Activated T-helper 1 cell treated with anti-CD3 and anti-CD28 coated beads, Interleukin-12 subunit alpha, Interleukin-12 subunit beta, Interleukin-2, Interleukin-4 antibody, amounts not matched to agents 30 ng/mL and 10 ng/mL and 1 ng/mL, durations not matched to agents 14 hours and 24 hours and 36 hours (primary cell): ENCODE measurements at regions of chr2 and their contacts with region 1.

Region 1: DNA sequence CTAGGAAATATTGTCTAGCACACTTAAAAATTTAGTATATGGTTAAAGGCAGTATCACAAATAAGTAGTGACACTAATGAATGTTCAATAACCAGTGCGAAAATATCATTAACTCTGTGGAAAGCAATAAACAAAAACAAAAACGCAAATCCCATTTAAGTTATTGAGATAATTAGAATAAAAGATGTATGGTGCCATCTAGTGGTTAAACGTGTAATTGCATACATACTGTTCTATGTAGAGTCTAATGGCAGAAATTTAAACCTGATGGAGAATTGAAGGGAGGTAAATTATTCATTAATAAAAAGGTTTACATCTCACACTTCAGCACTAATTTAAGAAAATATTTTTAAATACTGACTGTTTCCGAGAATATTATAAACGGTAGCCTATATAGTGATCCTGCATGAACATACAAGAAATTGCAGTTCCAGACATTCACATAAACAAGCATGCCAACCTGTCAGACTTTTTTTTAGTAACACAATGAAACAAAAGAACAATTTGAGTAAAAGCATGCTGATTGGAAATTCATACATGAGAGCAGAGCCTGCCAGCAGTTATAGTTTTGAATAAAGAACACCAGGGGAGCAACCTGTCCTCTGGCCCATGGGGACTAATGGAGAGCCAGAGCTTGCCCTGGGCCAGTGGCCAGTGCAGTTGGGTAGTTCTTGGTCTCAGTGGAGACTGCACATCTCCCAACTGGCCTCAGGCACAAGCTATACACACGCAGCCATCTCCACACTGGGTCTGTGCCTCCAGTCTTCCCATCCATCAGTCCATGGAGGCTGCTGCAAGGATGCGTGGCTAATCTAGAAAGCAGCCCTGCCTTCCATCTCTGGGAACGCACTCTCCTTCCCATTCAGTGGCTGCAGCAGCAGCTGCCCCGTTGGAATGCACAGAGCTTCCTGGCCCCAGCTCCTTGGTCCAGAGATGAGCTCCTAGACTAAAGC is 28.0 kb downstream of the GCG start:
- DNase-seq: no peak
- H3K4me3 Mint-ChIP-seq: no peak overlapping the region
- H3K27ac Mint-ChIP-seq: no peak overlapping the region
- H3K4me1 Mint-ChIP-seq: peaks cover 21% of the 10 kb centered on the region
- H3K27me3 Mint-ChIP-seq: no peaks in the 10 kb centered on the region

Region 2: DNA sequence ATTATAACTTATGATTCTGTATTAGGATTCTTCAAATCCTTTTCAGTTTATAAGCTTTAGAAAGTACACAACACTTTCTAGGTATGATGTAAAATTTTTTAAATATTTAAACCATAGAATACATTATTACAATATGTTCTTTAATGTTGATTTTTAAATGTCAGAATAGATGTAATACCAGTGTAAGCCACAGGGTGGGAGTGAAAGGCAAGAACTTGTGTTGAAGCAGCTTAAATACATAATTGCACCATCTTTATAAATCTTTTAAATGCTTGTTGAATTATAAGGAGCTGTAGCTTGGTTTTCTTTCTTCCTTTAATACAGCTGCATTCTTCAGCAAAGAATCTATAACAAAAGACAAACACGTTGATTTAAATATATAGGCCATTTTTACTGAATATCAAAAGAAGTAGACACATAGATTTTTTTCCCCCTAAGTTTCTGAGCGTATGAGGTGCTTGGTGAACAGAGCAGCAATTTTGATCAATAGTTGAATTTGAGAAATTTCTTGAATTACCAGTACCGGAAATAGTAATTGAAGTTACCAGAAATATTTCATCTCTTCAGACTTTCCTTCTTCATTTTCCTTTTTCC is 900.8 kb before region 1 on chr2:
- intact Hi-C with region 1: loop called (anchors 5 kb)
- DNase-seq: no peak
- H3K4me3 Mint-ChIP-seq: no peak overlapping the region
- H3K27ac Mint-ChIP-seq: no peak overlapping the region
- H3K4me1 Mint-ChIP-seq: peaks cover 20% of the 10 kb centered on the region
- H3K27me3 Mint-ChIP-seq: no peaks in the 10 kb centered on the region

Region 3: DNA sequence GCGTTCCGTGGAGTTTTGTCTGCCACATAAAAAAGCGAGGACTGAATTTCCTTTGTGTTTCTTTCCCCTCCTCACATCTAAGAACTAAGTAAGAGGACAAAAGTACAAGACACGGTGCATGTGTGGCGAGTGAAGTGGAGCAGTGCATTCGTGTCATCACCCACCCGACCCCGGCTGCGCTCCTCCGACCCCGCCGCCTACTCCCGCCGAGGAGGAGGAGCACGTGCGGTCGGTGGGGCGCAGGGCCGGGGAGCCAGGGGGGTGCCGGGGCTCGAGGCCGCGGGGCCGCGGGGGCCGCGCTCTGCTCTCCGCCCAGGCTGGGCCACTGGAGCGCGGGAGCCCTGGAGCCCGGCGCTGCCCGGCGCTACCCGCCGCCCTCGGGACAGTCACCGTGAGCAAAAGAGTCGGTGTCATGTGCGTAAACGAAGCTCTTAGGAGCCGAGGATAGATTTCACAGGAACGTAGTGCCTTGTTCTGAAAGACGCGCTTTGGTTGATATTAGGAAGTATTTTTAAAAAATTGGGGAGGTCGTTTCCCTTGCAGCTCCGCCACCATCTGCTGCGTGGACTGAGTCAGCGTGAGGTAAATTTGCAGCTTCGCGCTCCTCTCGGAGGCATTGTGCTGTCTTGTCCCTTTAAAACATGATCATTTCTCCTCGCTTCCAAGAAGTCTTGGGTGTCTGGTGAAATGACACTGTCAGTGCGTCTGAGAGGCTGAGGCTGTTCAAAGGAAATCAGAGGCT is 697.0 kb before region 1 on chr2:
- intact Hi-C with region 1: loop called (anchors 5 kb)
- DNase-seq: no peak
- H3K4me3 Mint-ChIP-seq: peak overlapping the region; percentile 74
- H3K27ac Mint-ChIP-seq: peak overlapping the region; percentile 72
- H3K4me1 Mint-ChIP-seq: peaks cover 29% of the 10 kb centered on the region
- H3K27me3 Mint-ChIP-seq: peaks cover 84% of the 10 kb centered on the region

Region 4: GRCh38 chr2:161946489-161947107 is 177.5 kb before region 1 on chr2:
- intact Hi-C with region 1: loop called (anchors 1 kb)
- DNase-seq: no peak
- H3K4me3 Mint-ChIP-seq: no peak overlapping the region
- H3K27ac Mint-ChIP-seq: peak overlapping the region; percentile 15
- H3K4me1 Mint-ChIP-seq: peaks cover 56% of the 10 kb centered on the region
- H3K27me3 Mint-ChIP-seq: peaks cover 6% of the 10 kb centered on the region

Region 5: DNA sequence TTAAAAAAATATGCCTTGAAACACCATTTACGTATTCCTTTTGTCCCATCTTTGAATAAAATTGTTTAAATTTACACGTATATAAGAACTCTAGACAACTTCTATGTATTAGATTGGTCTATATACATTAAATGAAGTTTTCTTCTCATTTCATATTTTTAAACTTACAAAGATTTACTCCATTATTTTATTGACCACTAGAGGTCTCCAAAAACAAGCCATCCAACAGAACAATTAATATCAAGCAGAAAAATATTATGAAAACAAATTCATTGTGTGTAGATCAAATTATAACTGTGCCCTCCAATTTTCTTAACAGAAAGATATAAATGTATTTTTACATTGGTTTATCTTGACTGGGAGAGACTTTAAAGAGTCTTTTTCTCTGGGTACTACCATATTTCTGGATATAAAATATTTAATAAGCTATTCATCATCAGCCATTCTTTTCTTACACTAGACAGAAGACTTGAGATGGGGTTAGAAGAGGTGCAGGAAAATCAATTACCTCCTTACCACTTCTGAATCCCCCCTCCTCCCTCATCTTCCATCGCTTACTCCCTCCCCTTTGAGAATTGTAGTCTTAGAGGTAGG is 116.5 kb before region 1 on chr2:
- intact Hi-C with region 1: loop called (anchors 1 kb)
- DNase-seq: no peak
- H3K4me3 Mint-ChIP-seq: no peak overlapping the region
- H3K27ac Mint-ChIP-seq: no peak overlapping the region
- H3K4me1 Mint-ChIP-seq: peaks cover 83% of the 10 kb centered on the region
- H3K27me3 Mint-ChIP-seq: no peaks in the 10 kb centered on the region

Region 6: DNA sequence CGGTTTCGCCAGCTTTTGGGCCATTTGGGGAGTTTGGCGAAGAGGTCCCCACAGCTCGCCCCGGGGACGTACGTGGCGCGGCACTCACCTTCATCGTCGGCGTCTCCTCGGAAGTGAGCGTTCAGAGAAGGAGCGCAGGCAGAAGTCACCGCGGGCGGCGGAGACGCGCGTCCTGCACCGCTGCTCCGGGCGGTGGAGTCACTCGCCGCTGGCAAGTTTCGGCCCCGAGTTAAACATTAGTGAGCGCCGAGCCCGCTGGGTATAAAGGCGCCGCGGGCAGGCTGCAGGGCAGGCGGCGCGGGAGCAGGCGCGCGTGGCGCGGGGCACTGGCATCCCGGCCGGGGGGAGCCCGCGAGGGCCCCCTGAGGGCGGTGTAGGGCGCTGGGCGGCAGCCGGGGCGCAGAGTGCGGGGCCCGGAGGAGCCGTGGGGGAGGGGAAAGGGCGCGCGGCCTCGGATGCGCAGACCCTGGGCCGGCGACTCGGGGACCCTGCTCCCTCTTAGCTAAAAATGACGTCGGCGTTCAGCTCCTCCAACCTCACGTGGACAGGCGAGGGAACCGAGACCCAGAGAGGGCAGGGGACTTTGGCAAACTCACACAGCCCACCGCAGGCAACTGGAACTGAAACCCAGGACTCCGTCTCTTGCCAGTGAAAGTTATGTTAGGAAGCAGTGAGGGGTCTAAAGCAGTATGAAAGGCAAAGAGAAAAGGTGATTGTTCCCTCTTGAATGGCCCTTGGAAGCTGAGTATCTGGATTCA is 50.0 kb before region 1 on chr2 and contains the start of gene DPP4:
- intact Hi-C with region 1: loop called (anchors 1 kb)
- DNase-seq: peak; percentile 42
- H3K4me3 Mint-ChIP-seq: peak within 1 kb of the TSS; percentile 98
- H3K27ac Mint-ChIP-seq: peak within 1 kb of the TSS; percentile 93
- H3K4me1 Mint-ChIP-seq: peaks cover 55% of the 10 kb centered on the region
- H3K27me3 Mint-ChIP-seq: no peaks in the 10 kb centered on the region
- total RNA-seq, gene DPP4: 94.4 and 99.9 TPM in 2 replicates

Region 7: GRCh38 chr2:162091325-162092007 is 32.6 kb before region 1 on chr2:
- intact Hi-C with region 1: no loop called
- DNase-seq: no peak
- H3K4me3 Mint-ChIP-seq: no peak overlapping the region
- H3K27ac Mint-ChIP-seq: no peak overlapping the region
- H3K4me1 Mint-ChIP-seq: peaks cover 24% of the 10 kb centered on the region
- H3K27me3 Mint-ChIP-seq: no peaks in the 10 kb centered on the region

Region 8: GRCh38 chr2:162138310-162138709 is 14.2 kb after region 1 on chr2:
- intact Hi-C with region 1: no loop called
- DNase-seq: no peak
- H3K4me3 Mint-ChIP-seq: no peak overlapping the region
- H3K27ac Mint-ChIP-seq: no peak overlapping the region
- H3K4me1 Mint-ChIP-seq: no peaks in the 10 kb centered on the region
- H3K27me3 Mint-ChIP-seq: peaks cover 30% of the 10 kb centered on the region

Region 9: GRCh38 chr2:162465430-162465829 is 341.3 kb after region 1 on chr2:
- intact Hi-C with region 1: no loop called
- DNase-seq: no peak
- H3K4me3 Mint-ChIP-seq: no peak overlapping the region
- H3K27ac Mint-ChIP-seq: no peak overlapping the region
- H3K4me1 Mint-ChIP-seq: no peaks in the 10 kb centered on the region
- H3K27me3 Mint-ChIP-seq: no peaks in the 10 kb centered on the region